ENCODE measurements at regions of chr11 and their contacts with region 1.

Region 1: DNA sequence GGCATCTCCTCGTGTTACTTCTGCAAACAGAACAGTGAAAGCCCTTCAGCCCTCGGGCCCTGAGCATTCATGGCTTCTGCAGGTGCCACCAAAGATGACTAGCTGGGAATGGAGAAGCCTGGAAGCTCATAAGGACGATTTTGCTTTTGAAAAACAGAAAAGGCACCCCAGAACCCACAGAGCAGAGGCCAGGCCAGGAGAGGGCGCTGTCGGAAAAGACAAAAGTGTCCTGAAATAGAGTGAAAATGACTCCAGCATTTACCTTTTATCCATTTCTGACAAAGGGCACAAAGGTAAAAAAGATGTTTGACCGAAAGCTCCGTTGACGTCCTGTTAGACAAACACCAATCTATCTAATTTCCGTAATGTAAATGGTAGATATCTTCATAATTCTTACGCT is 37.6 kb downstream of the ZNF195 start:
- DNase-seq: peak; percentile 34 to 82 (median 48)
- ATAC-seq: peak; percentile 72
- H3K4me3 ChIP-seq: no peak overlapping the region
- H3K27ac ChIP-seq: no peak overlapping the region
- H3K4me1 ChIP-seq: peaks cover 8 to 43% of the 10 kb centered on the region in 2 experiments
- H3K27me3 ChIP-seq: no peaks in the 10 kb centered on the region
- CTCF ChIP-seq: peak; percentile 87 to 90 (median 88)
- EP300 ChIP-seq: no peak
- POLR2A ChIP-seq: no peak
- RAD21 ChIP-seq: peak; percentile 29 to 82

Region 2: GRCh38 chr11:3378426-3379423 is 37.4 kb after region 1 on chr11 and contains the start of gene ZNF195:
- CTCF ChIA-PET with region 1: no interaction called
- POLR2A ChIA-PET with region 1: interaction called, 5 read pairs
- in situ Hi-C with region 1: no loop called
- intact Hi-C with region 1: loop called (anchors 2 kb)
- DNase-seq: peak; percentile 98 to 99 (median 98)
- ATAC-seq: peak; percentile 98
- H3K4me3 ChIP-seq: peak within 1 kb of the TSS; percentile 98
- H3K27ac ChIP-seq: peak within 1 kb of the TSS; percentile 95
- H3K4me1 ChIP-seq: peaks cover 6 to 15% of the 10 kb centered on the region in 2 experiments; a peak in 4 of 5 replicates
- H3K27me3 ChIP-seq: no peaks in the 10 kb centered on the region
- CTCF ChIP-seq: peak; percentile 13 to 27 (median 16); a peak in 1 of 6 replicates
- EP300 ChIP-seq: peak; percentile 26; the same call in 1 of the 2 replicates
- POLR2A ChIP-seq: peak; percentile 96
- RAD21 ChIP-seq: 0 out of 4 replicates have a peak, but pooled peaks of 1 of the 2 experiments have one; percentile 18
- polyA plus RNA-seq, gene ZNF195: 42.1 to 55.2 TPM

Region 3: DNA sequence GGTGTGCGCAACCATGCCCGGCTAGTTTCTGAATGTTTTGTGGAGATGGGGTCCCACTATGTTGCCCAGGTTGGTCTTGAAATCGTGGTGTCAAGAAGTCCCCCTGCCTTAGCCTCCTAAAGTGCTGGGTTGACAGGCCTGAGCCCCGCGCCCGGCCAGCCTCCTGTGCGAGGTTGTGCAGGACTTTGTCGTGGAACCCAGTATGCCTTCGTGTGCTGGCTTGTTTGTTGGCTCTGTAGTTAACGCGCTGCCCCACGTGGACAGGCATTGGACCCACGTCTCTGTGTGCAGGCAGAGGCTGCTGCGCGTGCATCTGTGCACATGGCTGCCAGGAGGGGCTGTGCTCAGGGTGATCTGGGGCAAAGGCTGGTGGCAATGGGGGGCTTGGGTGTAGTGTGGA is 71.5 kb after region 1 on chr11:
- CTCF ChIA-PET with region 1: interaction called, 10 read pairs
- POLR2A ChIA-PET with region 1: no interaction called
- in situ Hi-C with region 1: loop called (anchors 5 kb)
- intact Hi-C with region 1: loop called (anchors 1 kb)
- DNase-seq: no peak
- ATAC-seq: no peak
- H3K4me3 ChIP-seq: no peak overlapping the region
- H3K27ac ChIP-seq: no peak overlapping the region
- H3K4me1 ChIP-seq: peaks cover 0 to 10% of the 10 kb centered on the region in 2 experiments; a peak in 2 of 5 replicates
- H3K27me3 ChIP-seq: no peaks in the 10 kb centered on the region
- CTCF ChIP-seq: no peak
- EP300 ChIP-seq: no peak
- POLR2A ChIP-seq: no peak
- RAD21 ChIP-seq: no peak

Region 4: GRCh38 chr11:3723014-3723708 is 381.9 kb after region 1 on chr11:
- CTCF ChIA-PET with region 1: no interaction called
- POLR2A ChIA-PET with region 1: no interaction called
- in situ Hi-C with region 1: no loop called
- intact Hi-C with region 1: no loop called
- DNase-seq: no peak
- ATAC-seq: no peak
- H3K4me3 ChIP-seq: no peak overlapping the region
- H3K27ac ChIP-seq: no peak overlapping the region
- H3K4me1 ChIP-seq: no peaks in the 10 kb centered on the region
- H3K27me3 ChIP-seq: no peaks in the 10 kb centered on the region
- CTCF ChIP-seq: no peak
- EP300 ChIP-seq: no peak
- POLR2A ChIP-seq: no peak
- RAD21 ChIP-seq: no peak

Region 5: DNA sequence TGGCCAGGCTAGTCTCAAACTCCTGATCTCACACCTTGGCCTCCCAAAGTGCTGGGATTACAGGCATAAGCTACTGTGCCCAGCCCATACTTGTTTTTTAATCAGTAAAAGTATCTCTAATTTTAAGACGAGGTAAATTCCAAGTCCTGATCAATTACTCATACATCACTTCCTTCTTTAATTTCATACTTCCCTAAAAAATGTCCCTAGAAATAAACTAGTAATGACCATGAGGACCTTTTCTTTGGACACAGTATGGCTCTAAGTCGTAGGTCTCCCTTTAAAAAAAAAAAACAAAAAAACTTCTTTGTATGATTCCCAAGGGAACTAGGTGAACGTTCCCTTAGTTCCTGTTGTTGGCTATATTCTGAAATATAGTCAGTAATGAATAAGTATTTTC is 426.2 kb after region 1 on chr11:
- CTCF ChIA-PET with region 1: no interaction called
- POLR2A ChIA-PET with region 1: no interaction called
- in situ Hi-C with region 1: no loop called
- intact Hi-C with region 1: no loop called
- DNase-seq: no peak
- ATAC-seq: no peak
- H3K4me3 ChIP-seq: no peak overlapping the region
- H3K27ac ChIP-seq: no peak overlapping the region
- H3K4me1 ChIP-seq: no peaks in the 10 kb centered on the region
- H3K27me3 ChIP-seq: no peaks in the 10 kb centered on the region
- CTCF ChIP-seq: no peak
- EP300 ChIP-seq: no peak
- POLR2A ChIP-seq: no peak
- RAD21 ChIP-seq: no peak